ENCODE measurements at regions of chr19 and their contacts with region 1.

Region 1: GRCh38 chr19:9413240-9413954 is 22.0 kb downstream of the ZNF266 start:
- DNase-seq: no peak
- H3K4me3 ChIP-seq: no peak overlapping the region
- H3K27me3 ChIP-seq: no peaks in the 10 kb centered on the region
- CTCF ChIP-seq: no peak

Region 2: GRCh38 chr19:7919610-7920518 is 1493.5 kb before region 1 on chr19 and contains the start of gene SNAPC2:
- CTCF ChIA-PET with region 1: no interaction called
- POLR2A ChIA-PET with region 1: interaction called, 20 read pairs
- DNase-seq: peak; percentile 56
- H3K4me3 ChIP-seq: peak within 1 kb of the TSS; percentile 82
- H3K27me3 ChIP-seq: no peaks in the 10 kb centered on the region
- CTCF ChIP-seq: no peak
- polyA plus RNA-seq, gene SNAPC2: 16.6 and 28.2 TPM in 2 replicates

Measured in BJ (cell line).